ENCODE measurements at regions of chr1 and their contacts with region 1.

Region 1: GRCh38 chr1:211783897-211784296 is 46.7 kb downstream of the LPGAT1 start:
- DNase-seq: no peak
- ATAC-seq: no peak
- H3K4me3 ChIP-seq: no peak overlapping the region
- H3K27ac ChIP-seq: no peak overlapping the region
- H3K4me1 ChIP-seq: no peaks in the 10 kb centered on the region
- H3K27me3 ChIP-seq: no peaks in the 10 kb centered on the region
- CTCF ChIP-seq: no peak
- POLR2A ChIP-seq: no peak
- RAD21 ChIP-seq: no peak

Region 2: GRCh38 chr1:210681158-210681557 is 1102.7 kb before region 1 on chr1:
- CTCF ChIA-PET with region 1: no interaction called
- POLR2A ChIA-PET with region 1: no interaction called
- dilution Hi-C with region 1: no loop called
- in situ Hi-C with region 1: no loop called
- intact Hi-C with region 1: no loop called
- DNase-seq: peak; percentile 34
- ATAC-seq: no peak; the same call in 1 of the 2 replicates
- H3K4me3 ChIP-seq: no peak overlapping the region
- H3K27ac ChIP-seq: no peak overlapping the region
- H3K4me1 ChIP-seq: 0 out of 2 replicates have a peak, but pooled peaks cover 3% of the 10 kb centered on the region
- H3K27me3 ChIP-seq: no peaks in the 10 kb centered on the region
- CTCF ChIP-seq: no peak
- POLR2A ChIP-seq: no peak
- RAD21 ChIP-seq: no peak

Region 3: DNA sequence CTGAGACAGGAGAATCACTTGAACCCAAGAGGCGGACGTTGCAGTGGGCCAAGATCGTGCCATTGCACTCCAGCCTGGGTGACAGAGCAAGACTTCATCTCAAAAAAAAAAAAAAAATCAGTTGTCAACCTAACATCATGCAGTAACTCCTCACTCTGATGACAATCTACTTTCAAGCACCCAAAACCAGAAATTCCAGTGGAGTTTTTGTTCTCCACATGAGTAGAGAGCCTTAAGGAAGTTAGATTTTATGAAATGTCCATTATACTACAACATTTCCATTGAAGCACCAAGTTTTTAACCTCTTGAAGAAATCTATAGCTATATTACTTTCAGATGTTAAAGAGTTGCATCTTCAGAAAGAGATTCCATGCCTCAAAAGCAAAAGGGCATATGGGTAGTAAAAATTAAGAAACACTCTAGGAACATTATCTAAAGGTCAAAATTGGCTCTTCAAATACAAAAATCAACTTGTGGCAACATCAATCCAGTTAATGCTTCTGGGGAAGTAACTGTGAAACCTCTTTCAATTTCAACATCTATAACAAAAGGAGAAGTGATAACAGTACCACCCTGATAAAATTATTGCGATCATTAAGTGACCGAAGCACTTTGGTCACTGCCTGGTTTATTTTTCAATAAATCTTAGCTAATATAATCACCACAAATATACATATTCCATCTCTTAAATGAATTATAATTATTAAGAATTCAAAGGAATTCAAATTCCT is 38.9 kb after region 1 on chr1:
- CTCF ChIA-PET with region 1: no interaction called
- POLR2A ChIA-PET with region 1: interaction called, 13 read pairs
- dilution Hi-C with region 1: no loop called
- in situ Hi-C with region 1: no loop called
- intact Hi-C with region 1: no loop called
- DNase-seq: no peak
- ATAC-seq: no peak
- H3K4me3 ChIP-seq: no peak overlapping the region
- H3K27ac ChIP-seq: no peak overlapping the region
- H3K4me1 ChIP-seq: peaks cover 4% of the 10 kb centered on the region
- H3K27me3 ChIP-seq: no peaks in the 10 kb centered on the region
- CTCF ChIP-seq: no peak
- POLR2A ChIP-seq: no peak
- RAD21 ChIP-seq: no peak